MCF 10A (cell line): ENCODE measurements at regions of chr1 and their contacts with region 1.

Region 1: GRCh38 chr1:61337981-61338848 is 255.9 kb downstream of the NFIA start:
- DNase-seq: peak; percentile 91
- H3K4me3 Mint-ChIP-seq: peak overlapping the region; percentile 70
- H3K27ac Mint-ChIP-seq: peak overlapping the region; percentile 96
- H3K4me1 Mint-ChIP-seq: peaks cover 28% of the 10 kb centered on the region
- H3K27me3 Mint-ChIP-seq: no peaks in the 10 kb centered on the region
- CTCF ChIP-seq: peak; percentile 81

Region 2: DNA sequence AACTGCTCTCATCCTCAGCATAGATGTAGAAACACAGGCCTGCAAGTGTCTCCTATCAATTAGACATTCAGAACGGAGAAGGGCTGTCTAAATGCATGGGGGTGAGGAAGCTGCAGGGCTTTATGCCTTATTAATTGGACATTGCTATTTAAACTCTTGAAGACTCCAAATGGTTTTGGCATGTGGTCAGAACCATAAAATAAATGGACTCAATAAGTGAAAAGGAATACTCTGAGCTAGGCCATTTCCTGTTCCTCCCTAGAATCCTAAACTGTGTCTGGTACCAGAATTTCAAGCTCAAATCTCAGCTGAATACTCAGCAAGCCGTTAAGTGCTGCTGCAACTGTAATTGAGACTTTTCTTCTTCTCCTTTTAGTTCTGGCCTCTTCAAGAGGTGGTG is 1184.3 kb before region 1 on chr1:
- CTCF ChIA-PET with region 1: no interaction called
- POLR2A ChIA-PET with region 1: no interaction called
- intact Hi-C with region 1: loop called (anchors 10 kb)
- DNase-seq: no peak
- H3K4me3 Mint-ChIP-seq: no peak overlapping the region
- H3K27ac Mint-ChIP-seq: no peak overlapping the region
- H3K4me1 Mint-ChIP-seq: no peaks in the 10 kb centered on the region
- H3K27me3 Mint-ChIP-seq: peaks cover 22% of the 10 kb centered on the region
- CTCF ChIP-seq: no peak

Region 3: GRCh38 chr1:61049850-61050540 is 288.2 kb before region 1 on chr1:
- CTCF ChIA-PET with region 1: interaction called, 60 read pairs
- POLR2A ChIA-PET with region 1: interaction called, 32 read pairs
- intact Hi-C with region 1: loop called (anchors 1 kb)
- DNase-seq: peak; percentile 90
- H3K4me3 Mint-ChIP-seq: peak overlapping the region; percentile 76
- H3K27ac Mint-ChIP-seq: peak overlapping the region; percentile 19
- H3K4me1 Mint-ChIP-seq: peaks cover 20% of the 10 kb centered on the region
- H3K27me3 Mint-ChIP-seq: no peaks in the 10 kb centered on the region
- CTCF ChIP-seq: peak; percentile 93

Region 4: GRCh38 chr1:61226784-61227567 is 111.2 kb before region 1 on chr1:
- CTCF ChIA-PET with region 1: interaction called, 4 read pairs
- POLR2A ChIA-PET with region 1: interaction called, 4 read pairs
- intact Hi-C with region 1: loop called (anchors 5 kb)
- DNase-seq: peak; percentile 95
- H3K4me3 Mint-ChIP-seq: peak overlapping the region; percentile 56
- H3K27ac Mint-ChIP-seq: peak overlapping the region; percentile 49
- H3K4me1 Mint-ChIP-seq: peaks cover 29% of the 10 kb centered on the region
- H3K27me3 Mint-ChIP-seq: no peaks in the 10 kb centered on the region
- CTCF ChIP-seq: no peak

Region 5: GRCh38 chr1:61318319-61319125 is 19.7 kb before region 1 on chr1:
- CTCF ChIA-PET with region 1: interaction called, 5 read pairs
- POLR2A ChIA-PET with region 1: interaction called, 43 read pairs
- intact Hi-C with region 1: no loop called
- DNase-seq: peak; percentile 82
- H3K4me3 Mint-ChIP-seq: peak overlapping the region; percentile 64
- H3K27ac Mint-ChIP-seq: peak overlapping the region; percentile 99
- H3K4me1 Mint-ChIP-seq: peaks cover 38% of the 10 kb centered on the region
- H3K27me3 Mint-ChIP-seq: no peaks in the 10 kb centered on the region
- CTCF ChIP-seq: no peak

Region 6: GRCh38 chr1:61368876-61369275 is 30.7 kb after region 1 on chr1:
- CTCF ChIA-PET with region 1: no interaction called
- POLR2A ChIA-PET with region 1: no interaction called
- intact Hi-C with region 1: no loop called
- DNase-seq: no peak
- H3K4me3 Mint-ChIP-seq: no peak overlapping the region
- H3K27ac Mint-ChIP-seq: no peak overlapping the region
- H3K4me1 Mint-ChIP-seq: no peaks in the 10 kb centered on the region
- H3K27me3 Mint-ChIP-seq: no peaks in the 10 kb centered on the region
- CTCF ChIP-seq: no peak